GM12878 (cell line): ENCODE measurements at regions of chr11 and their contacts with region 1.

Region 1: GRCh38 chr11:36041988-36042611 is 98.2 kb downstream of the LDLRAD3 start:
- DNase-seq: no peak
- ATAC-seq: peak; percentile 86
- H3K4me3 ChIP-seq: no peak overlapping the region
- H3K27ac ChIP-seq: no peak overlapping the region
- H3K4me1 ChIP-seq: no peaks in the 10 kb centered on the region
- H3K27me3 ChIP-seq: no peaks in the 10 kb centered on the region; a peak in 1 of 4 replicates
- CTCF ChIP-seq: peak; percentile 48 to 58 (median 51); a peak in 5 of 6 replicates
- EP300 ChIP-seq: no peak
- POLR2A ChIP-seq: no peak
- RAD21 ChIP-seq: peak; percentile 63

Region 2: DNA sequence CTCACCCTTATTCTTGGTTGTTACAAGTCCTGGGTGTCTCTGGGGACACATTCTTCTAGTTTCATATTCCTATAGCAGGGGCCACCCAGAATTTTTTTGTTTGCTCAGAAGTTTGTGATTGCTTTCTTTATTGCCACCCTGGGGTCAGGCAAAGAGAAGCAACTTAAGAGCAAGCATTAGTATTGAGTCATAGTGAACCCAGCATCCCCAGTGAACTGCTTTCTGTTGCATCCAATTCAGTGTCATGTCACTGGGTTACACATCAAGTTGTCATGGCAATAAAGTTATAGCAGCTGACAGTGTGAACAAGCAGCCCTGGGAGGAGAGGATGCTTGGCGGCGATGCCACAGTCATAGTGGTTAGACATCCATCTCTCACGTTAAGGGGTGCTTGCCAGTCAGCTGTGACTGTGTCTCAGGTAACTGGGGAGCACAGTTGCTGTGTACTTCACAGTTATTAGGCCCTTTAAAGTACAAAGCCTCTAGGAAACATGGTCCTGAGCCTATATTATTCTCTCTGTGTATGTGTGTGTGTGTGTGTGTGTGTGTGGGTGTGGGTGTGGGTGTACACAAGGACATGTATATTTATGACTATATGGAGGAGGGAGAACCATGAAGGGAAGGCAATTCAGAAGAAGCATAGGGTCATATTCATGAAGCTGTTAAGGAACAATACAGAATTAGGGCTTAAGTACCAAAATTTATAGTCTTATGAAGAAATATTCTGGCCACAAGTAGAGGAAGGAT is 327.0 kb before region 1 on chr11:
- CTCF ChIA-PET with region 1: no interaction called
- POLR2A ChIA-PET with region 1: no interaction called
- RAD21 ChIA-PET with region 1: no interaction called
- SMC1A ChIA-PET with region 1: no interaction called
- in situ Hi-C with region 1: no loop called
- intact Hi-C with region 1: no loop called
- DNase-seq: peak; percentile 77
- ATAC-seq: peak; percentile 91
- H3K4me3 ChIP-seq: no peak overlapping the region
- H3K27ac ChIP-seq: no peak overlapping the region; the same call in 1 of the 2 replicates
- H3K4me1 ChIP-seq: peaks cover 8% of the 10 kb centered on the region; the same call in 1 of the 2 replicates
- H3K27me3 ChIP-seq: no peaks in the 10 kb centered on the region
- CTCF ChIP-seq: no peak
- EP300 ChIP-seq: peak; percentile 47 to 55; a peak in 2 of 4 replicates
- POLR2A ChIP-seq: no peak
- RAD21 ChIP-seq: peak; percentile 13; the same call in 1 of the 2 replicates

Region 3: GRCh38 chr11:36009473-36009872 is 32.6 kb before region 1 on chr11:
- CTCF ChIA-PET with region 1: no interaction called
- POLR2A ChIA-PET with region 1: no interaction called
- RAD21 ChIA-PET with region 1: no interaction called
- SMC1A ChIA-PET with region 1: no interaction called
- in situ Hi-C with region 1: no loop called
- intact Hi-C with region 1: no loop called
- DNase-seq: no peak
- ATAC-seq: no peak
- H3K4me3 ChIP-seq: no peak overlapping the region
- H3K27ac ChIP-seq: no peak overlapping the region
- H3K4me1 ChIP-seq: no peaks in the 10 kb centered on the region
- H3K27me3 ChIP-seq: no peaks in the 10 kb centered on the region; a peak in 1 of 4 replicates
- CTCF ChIP-seq: no peak
- EP300 ChIP-seq: no peak
- POLR2A ChIP-seq: no peak
- RAD21 ChIP-seq: no peak

Region 4: DNA sequence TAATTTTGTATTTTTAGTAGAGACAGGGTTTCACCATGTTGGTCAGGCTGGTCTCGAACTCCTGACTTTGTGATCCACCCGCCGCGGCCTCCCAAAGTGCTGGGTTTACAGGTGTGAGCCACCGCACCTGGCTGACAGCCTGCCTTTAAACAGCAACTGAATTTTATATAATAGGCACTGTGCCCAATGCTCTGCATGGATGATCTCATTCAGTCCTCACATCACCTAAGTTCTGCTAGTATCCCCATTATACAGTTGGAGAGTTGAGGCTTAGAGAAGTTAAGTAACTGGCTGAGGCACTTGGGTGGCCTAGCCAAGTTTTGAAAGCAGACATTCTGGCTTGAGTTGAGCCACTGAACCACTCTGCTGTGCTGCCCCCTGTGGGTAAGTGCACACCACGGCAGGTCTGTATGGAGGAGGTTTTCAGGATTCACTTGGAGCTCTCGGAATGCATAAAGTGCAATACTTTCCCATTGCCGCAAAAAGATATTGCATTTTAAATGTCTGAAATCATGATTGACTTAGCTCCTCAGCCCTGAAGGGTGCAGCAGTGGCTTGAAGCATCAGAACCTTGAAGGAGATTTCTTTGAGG is 14.2 kb after region 1 on chr11:
- CTCF ChIA-PET with region 1: interaction called, 12 read pairs
- POLR2A ChIA-PET with region 1: no interaction called
- RAD21 ChIA-PET with region 1: no interaction called
- SMC1A ChIA-PET with region 1: interaction called, 12 read pairs
- in situ Hi-C with region 1: no loop called
- intact Hi-C with region 1: no loop called
- DNase-seq: no peak
- ATAC-seq: peak; percentile 60
- H3K4me3 ChIP-seq: no peak overlapping the region
- H3K27ac ChIP-seq: no peak overlapping the region
- H3K4me1 ChIP-seq: no peaks in the 10 kb centered on the region; the same call in 1 of the 2 replicates
- H3K27me3 ChIP-seq: no peaks in the 10 kb centered on the region; a peak in 1 of 4 replicates
- CTCF ChIP-seq: peak; percentile 41 to 62 (median 53); a peak in 5 of 6 replicates
- EP300 ChIP-seq: no peak
- POLR2A ChIP-seq: no peak
- RAD21 ChIP-seq: peak; percentile 65

Region 5: DNA sequence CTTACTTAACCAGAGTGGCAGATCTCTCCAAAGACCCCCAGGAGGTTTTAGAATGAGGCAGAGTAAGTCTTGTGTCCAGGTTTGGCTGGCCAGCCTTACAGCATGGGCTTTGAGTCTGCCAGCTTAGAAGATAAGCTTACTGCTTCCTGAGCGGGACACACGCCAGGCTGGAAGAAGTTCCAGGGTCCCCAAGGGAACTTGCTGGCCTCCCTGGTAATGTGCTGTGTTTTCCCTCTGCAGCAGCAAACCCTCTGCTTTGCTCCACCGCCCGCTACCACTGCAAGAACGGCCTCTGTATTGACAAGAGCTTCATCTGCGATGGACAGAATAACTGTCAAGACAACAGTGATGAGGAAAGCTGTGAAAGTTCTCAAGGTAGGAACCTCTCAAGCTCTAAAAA is 56.0 kb after region 1 on chr11:
- CTCF ChIA-PET with region 1: no interaction called
- POLR2A ChIA-PET with region 1: no interaction called
- RAD21 ChIA-PET with region 1: no interaction called
- SMC1A ChIA-PET with region 1: no interaction called
- in situ Hi-C with region 1: no loop called
- intact Hi-C with region 1: no loop called
- DNase-seq: no peak
- ATAC-seq: no peak
- H3K4me3 ChIP-seq: no peak overlapping the region
- H3K27ac ChIP-seq: no peak overlapping the region
- H3K4me1 ChIP-seq: no peaks in the 10 kb centered on the region
- H3K27me3 ChIP-seq: peaks cover 2% of the 10 kb centered on the region in 2 experiments; a peak in 1 of 4 replicates
- CTCF ChIP-seq: no peak
- EP300 ChIP-seq: no peak
- POLR2A ChIP-seq: no peak
- RAD21 ChIP-seq: no peak

Region 6: DNA sequence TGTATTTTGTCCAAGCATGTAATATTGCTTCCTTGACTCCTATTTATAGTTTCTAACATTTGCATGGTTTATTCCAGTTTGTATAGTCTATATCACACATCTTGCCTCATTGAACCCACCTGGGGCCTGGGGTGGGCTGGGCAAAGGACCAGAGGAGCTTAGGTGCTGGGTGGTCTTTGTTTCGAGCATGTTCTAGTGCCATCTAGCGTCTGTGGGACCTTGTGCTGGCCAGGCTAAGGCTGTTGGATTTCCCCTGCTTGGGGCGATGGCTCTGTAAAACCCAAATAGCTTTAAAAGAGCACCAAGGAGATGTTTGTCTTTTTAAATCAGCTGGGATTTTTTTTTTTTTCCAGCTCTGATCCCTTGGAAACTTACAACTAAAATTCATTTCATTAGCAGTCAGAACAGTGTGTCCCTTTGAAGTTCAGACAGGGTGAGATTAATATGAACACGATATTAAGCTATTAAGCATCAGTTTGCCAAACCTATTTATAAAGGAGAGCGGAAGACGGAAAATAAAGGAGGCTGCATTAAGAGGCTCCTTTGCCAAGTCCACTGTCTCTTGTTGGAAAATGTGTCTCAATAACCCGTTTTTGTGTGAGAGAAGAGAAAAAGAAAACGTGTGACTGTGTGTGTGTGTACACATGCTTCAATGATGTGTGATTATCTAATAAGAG is 89.8 kb after region 1 on chr11:
- CTCF ChIA-PET with region 1: interaction called, 61 read pairs
- POLR2A ChIA-PET with region 1: no interaction called
- RAD21 ChIA-PET with region 1: interaction called, 10 read pairs
- SMC1A ChIA-PET with region 1: interaction called, 24 read pairs
- in situ Hi-C with region 1: no loop called
- intact Hi-C with region 1: loop called (anchors 5 kb)
- DNase-seq: no peak
- ATAC-seq: peak; percentile 95
- H3K4me3 ChIP-seq: no peak overlapping the region
- H3K27ac ChIP-seq: no peak overlapping the region
- H3K4me1 ChIP-seq: no peaks in the 10 kb centered on the region
- H3K27me3 ChIP-seq: peaks cover 0 to 2% of the 10 kb centered on the region in 2 experiments; a peak in 2 of 4 replicates
- CTCF ChIP-seq: peak; percentile 63 to 77 (median 74)
- EP300 ChIP-seq: no peak
- POLR2A ChIP-seq: no peak
- RAD21 ChIP-seq: peak; percentile 78

Region 7: DNA sequence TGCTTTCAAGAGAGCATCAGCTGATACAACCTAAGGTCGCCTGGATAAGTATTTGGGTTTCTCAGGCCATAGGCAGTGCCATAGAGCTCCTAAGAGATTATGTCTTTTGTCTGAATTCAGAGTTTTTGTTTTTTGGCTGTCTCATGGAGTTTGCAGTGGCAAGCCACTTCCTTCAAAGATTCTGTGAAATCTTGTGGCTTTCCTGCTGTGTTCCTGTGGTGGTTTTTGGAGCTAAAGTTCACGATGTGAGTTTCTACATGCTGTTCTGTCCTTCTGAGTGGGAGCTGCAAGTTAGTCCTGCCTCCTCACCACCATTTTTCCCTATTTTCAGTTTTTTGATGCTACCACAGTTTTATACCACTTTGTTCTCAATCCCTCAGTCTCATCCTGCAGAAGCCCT is 135.7 kb after region 1 on chr11:
- CTCF ChIA-PET with region 1: no interaction called
- POLR2A ChIA-PET with region 1: no interaction called
- RAD21 ChIA-PET with region 1: no interaction called
- SMC1A ChIA-PET with region 1: no interaction called
- in situ Hi-C with region 1: no loop called
- intact Hi-C with region 1: no loop called
- DNase-seq: no peak
- ATAC-seq: no peak
- H3K4me3 ChIP-seq: no peak overlapping the region
- H3K27ac ChIP-seq: no peak overlapping the region
- H3K4me1 ChIP-seq: no peaks in the 10 kb centered on the region
- H3K27me3 ChIP-seq: no peaks in the 10 kb centered on the region
- CTCF ChIP-seq: no peak
- EP300 ChIP-seq: no peak
- POLR2A ChIP-seq: no peak
- RAD21 ChIP-seq: no peak

Region 8: GRCh38 chr11:36258730-36259360 is 216.7 kb after region 1 on chr11:
- CTCF ChIA-PET with region 1: interaction called, 32 read pairs
- POLR2A ChIA-PET with region 1: no interaction called
- RAD21 ChIA-PET with region 1: interaction called, 7 read pairs
- SMC1A ChIA-PET with region 1: interaction called, 5 read pairs
- in situ Hi-C with region 1: no loop called
- intact Hi-C with region 1: no loop called
- DNase-seq: no peak
- ATAC-seq: peak; percentile 87
- H3K4me3 ChIP-seq: no peak overlapping the region
- H3K27ac ChIP-seq: no peak overlapping the region
- H3K4me1 ChIP-seq: no peaks in the 10 kb centered on the region
- H3K27me3 ChIP-seq: no peaks in the 10 kb centered on the region; a peak in 1 of 4 replicates
- CTCF ChIP-seq: peak; percentile 42 to 45 (median 43); a peak in 5 of 6 replicates
- EP300 ChIP-seq: no peak
- POLR2A ChIP-seq: no peak
- RAD21 ChIP-seq: peak; percentile 62